Body of pancreas (tissue), 4 donors: ENCODE measurements at regions of chr22 and their contacts with region 1.

Region 1: DNA sequence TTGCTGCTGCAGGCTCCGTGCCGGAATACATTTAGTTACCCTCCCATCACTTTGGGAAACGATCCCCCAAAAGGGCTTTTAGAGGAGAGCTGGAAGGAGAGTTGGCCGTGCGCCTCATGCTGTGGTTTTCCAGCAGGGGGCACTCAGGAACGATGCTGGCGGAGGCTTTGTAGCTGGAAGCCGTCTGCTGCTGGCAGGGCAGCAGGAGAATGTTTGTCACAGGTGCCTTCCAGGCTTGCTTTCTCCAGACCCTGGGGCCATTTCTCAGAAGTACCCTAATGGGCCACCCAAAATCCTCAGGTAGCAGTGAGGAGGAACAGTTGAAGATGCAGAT is 30.0 kb upstream of the CABP7 start:
- DNase-seq: peak; percentile 56 to 73 (median 67)
- ATAC-seq: peak; percentile 66
- H3K4me3 ChIP-seq: no peak overlapping the region
- H3K27ac ChIP-seq: no peak overlapping the region
- H3K4me1 ChIP-seq: no peaks in the 10 kb centered on the region
- H3K27me3 ChIP-seq: no peaks in the 10 kb centered on the region
- CTCF ChIP-seq: peak; percentile 48 to 77 (median 67)
- POLR2A ChIP-seq: no peak

Region 2: GRCh38 chr22:30005213-30005857 is 315.5 kb after region 1 on chr22:
- intact Hi-C with region 1: loop called (anchors 10 kb)
- DNase-seq: peak; percentile 67 to 81 (median 78)
- ATAC-seq: peak; percentile 79
- H3K4me3 ChIP-seq: no peak overlapping the region
- H3K27ac ChIP-seq: no peak overlapping the region
- H3K4me1 ChIP-seq: peaks cover 4% of the 10 kb centered on the region
- H3K27me3 ChIP-seq: no peaks in the 10 kb centered on the region
- CTCF ChIP-seq: peak; percentile 79 to 94 (median 87)
- POLR2A ChIP-seq: no peak

Region 3: GRCh38 chr22:30089655-30089974 is 399.8 kb after region 1 on chr22:
- intact Hi-C with region 1: loop called (anchors 5 kb)
- DNase-seq: no peak
- ATAC-seq: no peak
- H3K4me3 ChIP-seq: no peak overlapping the region
- H3K27ac ChIP-seq: no peak overlapping the region
- H3K4me1 ChIP-seq: no peaks in the 10 kb centered on the region
- H3K27me3 ChIP-seq: no peaks in the 10 kb centered on the region
- CTCF ChIP-seq: no peak
- POLR2A ChIP-seq: no peak